ENCODE measurements at regions of chr1 and their contacts with region 1.

Region 1: GRCh38 chr1:37514350-37515184 is at the start of gene MEAF6:
- DNase-seq: peak; percentile 37
- H3K4me3 ChIP-seq: peak within 1 kb of the TSS; percentile 84
- H3K27ac ChIP-seq: peak within 1 kb of the TSS; percentile 83
- H3K27me3 ChIP-seq: no peaks in the 10 kb centered on the region
- CTCF ChIP-seq: peak; percentile 29; the same call in 1 of the 2 replicates
- polyA plus RNA-seq, gene MEAF6: 59.6 and 69.6 TPM in 2 replicates

Region 2: GRCh38 chr1:37288900-37289299 is 225.7 kb before region 1 on chr1:
- CTCF ChIA-PET with region 1: no interaction called
- POLR2A ChIA-PET with region 1: no interaction called
- DNase-seq: no peak
- H3K4me3 ChIP-seq: no peak overlapping the region
- H3K27ac ChIP-seq: no peak overlapping the region
- H3K27me3 ChIP-seq: no peaks in the 10 kb centered on the region
- CTCF ChIP-seq: no peak

Region 3: GRCh38 chr1:37486680-37487618 is 27.6 kb before region 1 on chr1:
- CTCF ChIA-PET with region 1: interaction called, 40 read pairs
- POLR2A ChIA-PET with region 1: interaction called, 3 read pairs
- DNase-seq: no peak
- H3K4me3 ChIP-seq: no peak overlapping the region
- H3K27ac ChIP-seq: peak overlapping the region; percentile 61
- H3K27me3 ChIP-seq: no peaks in the 10 kb centered on the region
- CTCF ChIP-seq: peak; percentile 99

Region 4: GRCh38 chr1:37537378-37537777 is 22.8 kb after region 1 on chr1:
- CTCF ChIA-PET with region 1: interaction called, 15 read pairs
- POLR2A ChIA-PET with region 1: interaction called, 8 read pairs
- DNase-seq: peak; percentile 45
- H3K4me3 ChIP-seq: no peak overlapping the region
- H3K27ac ChIP-seq: peak overlapping the region; percentile 31
- H3K27me3 ChIP-seq: no peaks in the 10 kb centered on the region
- CTCF ChIP-seq: no peak

Region 5: GRCh38 chr1:37556712-37557196 is 42.2 kb after region 1 on chr1 and contains the start of gene DNALI1:
- CTCF ChIA-PET with region 1: interaction called, 22 read pairs
- POLR2A ChIA-PET with region 1: interaction called, 7 read pairs
- DNase-seq: peak; percentile 81
- H3K4me3 ChIP-seq: peak within 1 kb of the TSS; percentile 70
- H3K27ac ChIP-seq: peak within 1 kb of the TSS; percentile 47
- H3K27me3 ChIP-seq: no peaks in the 10 kb centered on the region
- CTCF ChIP-seq: no peak
- polyA plus RNA-seq, gene DNALI1: 13.1 and 14.2 TPM in 2 replicates

Region 6: GRCh38 chr1:37682334-37682987 is 167.9 kb after region 1 on chr1:
- CTCF ChIA-PET with region 1: interaction called, 12 read pairs
- POLR2A ChIA-PET with region 1: no interaction called
- DNase-seq: peak; percentile 37
- H3K4me3 ChIP-seq: no peak overlapping the region
- H3K27ac ChIP-seq: no peak overlapping the region
- H3K27me3 ChIP-seq: peaks cover 4% of the 10 kb centered on the region
- CTCF ChIP-seq: peak; percentile 94